Activated naive CD8-positive, alpha-beta T cell treated with anti-CD3 and anti-CD28 coated beads, Interleukin-2, amount 10 ng/mL, durations not matched to agents 7 days and 5 days (primary cell): ENCODE measurements at regions of chr21 and their contacts with region 1.

Region 1: DNA sequence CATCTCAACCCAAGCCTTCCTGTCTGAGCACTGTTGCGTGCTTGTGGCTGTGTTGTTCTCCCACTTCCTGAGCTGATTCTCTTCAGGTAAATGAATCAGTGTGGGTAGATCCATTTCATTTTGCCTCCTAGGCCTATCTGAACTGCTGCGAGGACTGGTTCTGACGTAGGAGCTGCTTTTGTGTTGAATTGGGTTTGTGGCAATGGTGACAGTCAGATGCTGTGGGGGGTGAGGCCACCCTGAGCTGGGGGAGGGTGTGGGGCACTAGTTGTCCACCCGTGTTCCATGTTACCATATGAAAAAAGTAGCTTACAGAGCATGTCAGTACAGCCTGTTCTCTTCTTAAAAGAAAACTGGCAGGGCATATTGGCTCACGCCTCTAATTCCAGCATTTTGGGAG is 81.5 kb downstream of the MRPS6 start:
- DNase-seq: peak; percentile 60
- ATAC-seq: peak; percentile 93
- H3K4me3 Mint-ChIP-seq: peak overlapping the region; percentile 54
- H3K27ac Mint-ChIP-seq: peak overlapping the region; percentile 85
- H3K4me1 Mint-ChIP-seq: peaks cover 45% of the 10 kb centered on the region
- H3K27me3 Mint-ChIP-seq: no peaks in the 10 kb centered on the region

Region 2: GRCh38 chr21:34065027-34065426 is 89.9 kb before region 1 on chr21:
- POLR2A ChIA-PET with region 1: no interaction called
- DNase-seq: no peak
- ATAC-seq: no peak
- H3K4me3 Mint-ChIP-seq: no peak overlapping the region
- H3K27ac Mint-ChIP-seq: no peak overlapping the region
- H3K4me1 Mint-ChIP-seq: peaks cover 5% of the 10 kb centered on the region
- H3K27me3 Mint-ChIP-seq: peaks cover 7% of the 10 kb centered on the region

Region 3: DNA sequence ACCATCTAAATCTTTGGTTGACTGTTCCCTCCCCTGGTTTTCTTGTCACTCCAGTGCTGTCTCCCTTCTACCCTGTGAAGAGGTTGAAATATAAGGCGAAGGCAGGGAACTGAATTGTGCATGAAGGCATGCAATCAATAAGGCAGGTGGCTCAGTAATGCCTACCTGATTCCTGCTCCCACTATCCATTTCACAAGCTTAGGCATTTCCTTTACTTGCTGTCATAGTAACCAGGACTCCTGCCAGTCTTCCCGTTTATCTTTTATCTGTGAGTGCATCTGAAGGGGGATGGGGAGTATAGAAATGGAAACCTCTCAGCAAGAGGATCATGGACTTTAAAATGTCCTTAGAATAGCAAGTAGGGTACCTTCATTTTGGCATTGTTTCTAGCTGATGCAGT is 41.0 kb before region 1 on chr21:
- POLR2A ChIA-PET with region 1: no interaction called
- DNase-seq: no peak
- ATAC-seq: no peak
- H3K4me3 Mint-ChIP-seq: no peak overlapping the region
- H3K27ac Mint-ChIP-seq: no peak overlapping the region
- H3K4me1 Mint-ChIP-seq: peaks cover 31% of the 10 kb centered on the region
- H3K27me3 Mint-ChIP-seq: no peaks in the 10 kb centered on the region

Region 4: GRCh38 chr21:34129039-34129891 is 25.6 kb before region 1 on chr21:
- POLR2A ChIA-PET with region 1: interaction called, 16 read pairs
- DNase-seq: peak; percentile 51
- ATAC-seq: peak; percentile 95
- H3K4me3 Mint-ChIP-seq: peak overlapping the region; percentile 74
- H3K27ac Mint-ChIP-seq: peak overlapping the region; percentile 95
- H3K4me1 Mint-ChIP-seq: peaks cover 67% of the 10 kb centered on the region
- H3K27me3 Mint-ChIP-seq: no peaks in the 10 kb centered on the region